Mammary epithelial cell (primary cell): ENCODE measurements at regions of chr3 and their contacts with region 1.

Region 1: GRCh38 chr3:172666873-172667694 is 43.8 kb downstream of the NCEH1 start:
- DNase-seq: peak; percentile 70
- H3K4me3 ChIP-seq: no peak overlapping the region
- H3K27ac ChIP-seq: no peak overlapping the region
- H3K4me1 ChIP-seq: peaks cover 15% of the 10 kb centered on the region
- H3K27me3 ChIP-seq: no peaks in the 10 kb centered on the region
- CTCF ChIP-seq: peak; percentile 88 to 94

Region 2: DNA sequence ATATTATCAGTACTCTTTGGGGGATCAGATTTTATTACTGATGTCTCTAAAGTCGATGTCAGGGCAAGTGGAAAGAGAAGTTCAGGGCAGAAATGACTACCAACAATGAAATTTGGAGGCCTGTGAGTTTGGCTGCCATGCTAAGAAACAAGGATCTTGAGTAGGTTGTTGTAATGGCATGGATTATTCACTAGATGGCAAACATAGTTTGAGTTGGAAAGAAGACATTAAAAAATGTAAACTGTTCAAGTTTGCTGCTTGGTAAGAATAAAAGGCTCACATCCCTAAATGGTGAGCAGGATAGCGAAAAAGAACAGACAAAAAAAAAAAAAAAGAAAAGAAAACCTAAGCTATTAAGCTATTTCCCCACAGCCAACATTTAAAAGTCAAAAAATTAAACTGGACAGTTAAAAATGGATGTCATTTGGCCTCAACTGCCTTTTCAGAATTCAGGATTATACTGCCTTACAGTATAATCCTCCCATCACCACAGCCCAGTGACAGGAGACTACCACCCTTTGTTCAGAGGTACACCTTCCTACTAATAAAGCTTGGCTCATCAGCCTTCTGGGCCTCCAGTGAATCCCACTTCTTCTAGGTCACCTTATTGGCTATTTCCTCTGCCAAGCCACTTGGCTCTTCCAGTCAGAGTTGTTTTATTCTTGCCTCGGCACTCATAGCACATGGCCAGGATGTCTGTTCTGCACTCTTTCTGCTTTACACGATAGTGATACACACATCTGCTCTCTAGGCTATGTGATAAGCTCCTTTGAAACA is 1020.5 kb before region 1 on chr3:
- CTCF ChIA-PET with region 1: no interaction called
- dilution Hi-C with region 1: no loop called
- in situ Hi-C with region 1: no loop called
- intact Hi-C with region 1: loop called (anchors 2 kb)
- DNase-seq: peak; percentile 46
- H3K4me3 ChIP-seq: no peak overlapping the region
- H3K27ac ChIP-seq: no peak overlapping the region
- H3K4me1 ChIP-seq: no peaks in the 10 kb centered on the region
- H3K27me3 ChIP-seq: no peaks in the 10 kb centered on the region
- CTCF ChIP-seq: peak; percentile 57 to 66

Region 3: GRCh38 chr3:172355839-172356238 is 311.2 kb before region 1 on chr3:
- CTCF ChIA-PET with region 1: no interaction called
- dilution Hi-C with region 1: no loop called
- in situ Hi-C with region 1: no loop called
- intact Hi-C with region 1: loop called (anchors 5 kb)
- DNase-seq: peak; percentile 74
- H3K4me3 ChIP-seq: no peak overlapping the region
- H3K27ac ChIP-seq: no peak overlapping the region
- H3K4me1 ChIP-seq: peaks cover 7% of the 10 kb centered on the region
- H3K27me3 ChIP-seq: no peaks in the 10 kb centered on the region
- CTCF ChIP-seq: no peak

Region 4: DNA sequence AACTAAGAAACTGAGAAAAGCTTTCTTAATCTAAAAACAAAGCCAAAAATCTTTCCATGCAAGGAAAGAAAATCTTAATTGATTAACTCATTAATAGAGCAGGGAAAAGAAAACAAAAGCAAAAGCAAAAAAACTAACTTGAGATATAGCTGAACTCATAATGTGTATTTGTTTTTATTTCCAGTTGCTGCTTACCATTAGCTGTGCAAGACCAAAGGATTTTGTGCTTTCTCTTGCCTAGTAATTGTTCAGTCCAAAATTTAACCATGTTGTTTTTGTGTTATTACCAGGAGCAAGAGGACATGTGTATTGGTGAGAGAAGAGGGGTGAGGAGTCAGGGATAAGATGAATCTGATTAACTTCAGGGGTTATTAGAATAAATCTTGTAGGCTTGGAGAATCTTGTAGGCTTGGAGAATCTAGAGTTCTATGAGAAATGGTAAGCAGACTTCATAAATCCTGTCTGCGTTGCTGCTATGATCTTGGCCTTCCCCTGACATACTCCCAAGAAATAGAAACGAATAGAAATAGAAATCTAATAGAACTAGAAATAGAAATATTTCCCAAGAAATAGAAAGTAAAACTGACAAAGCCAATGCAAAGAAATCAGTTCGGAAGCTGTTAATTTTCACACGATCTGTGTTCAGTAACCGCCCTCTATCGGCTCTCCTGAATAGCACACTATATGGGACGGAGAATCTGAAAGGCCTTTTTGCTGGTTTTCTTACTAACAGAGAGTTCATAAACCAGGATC is 71.3 kb before region 1 on chr3:
- CTCF ChIA-PET with region 1: no interaction called
- dilution Hi-C with region 1: no loop called
- in situ Hi-C with region 1: no loop called
- intact Hi-C with region 1: loop called (anchors 2 kb)
- DNase-seq: peak; percentile 65
- H3K4me3 ChIP-seq: peak overlapping the region; percentile 11 to 23 (median 11)
- H3K27ac ChIP-seq: peak overlapping the region; percentile 28
- H3K4me1 ChIP-seq: peaks cover 8% of the 10 kb centered on the region
- H3K27me3 ChIP-seq: no peaks in the 10 kb centered on the region
- CTCF ChIP-seq: peak; percentile 86 to 90

Region 5: GRCh38 chr3:172750368-172751174 is 83.5 kb after region 1 on chr3 and contains the start of gene ECT2:
- CTCF ChIA-PET with region 1: interaction called, 28 read pairs
- dilution Hi-C with region 1: no loop called
- in situ Hi-C with region 1: no loop called
- intact Hi-C with region 1: no loop called
- DNase-seq: peak; percentile 100
- H3K4me3 ChIP-seq: peak within 1 kb of the TSS; percentile 97 to 100 (median 99)
- H3K27ac ChIP-seq: peak within 1 kb of the TSS; percentile 99
- H3K4me1 ChIP-seq: peaks cover 20% of the 10 kb centered on the region
- H3K27me3 ChIP-seq: no peaks in the 10 kb centered on the region
- CTCF ChIP-seq: peak; percentile 75 to 82
- total RNA-seq, gene ECT2: 24.5 to 46.4 TPM